Panc1 (cell line): ENCODE measurements at regions of chr10 and their contacts with region 1.

Region 1: GRCh38 chr10:22988581-22989360 is 60.9 kb downstream of the ARMC3 start:
- DNase-seq: peak; percentile 35
- ATAC-seq: peak; percentile 75; the same call in 1 of the 2 replicates
- H3K4me3 ChIP-seq: no peak overlapping the region
- H3K27ac ChIP-seq: no peak overlapping the region
- H3K4me1 ChIP-seq: no peaks in the 10 kb centered on the region; the same call in 1 of the 2 replicates
- H3K27me3 ChIP-seq: no peaks in the 10 kb centered on the region; the same call in 1 of the 2 replicates
- CTCF ChIP-seq: peak; percentile 69; the same call in 1 of the 2 replicates

Region 2: GRCh38 chr10:22573820-22574569 is 414.8 kb before region 1 on chr10:
- CTCF ChIA-PET with region 1: no interaction called
- POLR2A ChIA-PET with region 1: no interaction called
- in situ Hi-C with region 1: no loop called
- intact Hi-C with region 1: loop called (anchors 10 kb)
- DNase-seq: no peak
- ATAC-seq: no peak
- H3K4me3 ChIP-seq: no peak overlapping the region
- H3K27ac ChIP-seq: no peak overlapping the region
- H3K4me1 ChIP-seq: no peaks in the 10 kb centered on the region
- H3K27me3 ChIP-seq: no peaks in the 10 kb centered on the region
- CTCF ChIP-seq: peak; percentile 66

Region 3: DNA sequence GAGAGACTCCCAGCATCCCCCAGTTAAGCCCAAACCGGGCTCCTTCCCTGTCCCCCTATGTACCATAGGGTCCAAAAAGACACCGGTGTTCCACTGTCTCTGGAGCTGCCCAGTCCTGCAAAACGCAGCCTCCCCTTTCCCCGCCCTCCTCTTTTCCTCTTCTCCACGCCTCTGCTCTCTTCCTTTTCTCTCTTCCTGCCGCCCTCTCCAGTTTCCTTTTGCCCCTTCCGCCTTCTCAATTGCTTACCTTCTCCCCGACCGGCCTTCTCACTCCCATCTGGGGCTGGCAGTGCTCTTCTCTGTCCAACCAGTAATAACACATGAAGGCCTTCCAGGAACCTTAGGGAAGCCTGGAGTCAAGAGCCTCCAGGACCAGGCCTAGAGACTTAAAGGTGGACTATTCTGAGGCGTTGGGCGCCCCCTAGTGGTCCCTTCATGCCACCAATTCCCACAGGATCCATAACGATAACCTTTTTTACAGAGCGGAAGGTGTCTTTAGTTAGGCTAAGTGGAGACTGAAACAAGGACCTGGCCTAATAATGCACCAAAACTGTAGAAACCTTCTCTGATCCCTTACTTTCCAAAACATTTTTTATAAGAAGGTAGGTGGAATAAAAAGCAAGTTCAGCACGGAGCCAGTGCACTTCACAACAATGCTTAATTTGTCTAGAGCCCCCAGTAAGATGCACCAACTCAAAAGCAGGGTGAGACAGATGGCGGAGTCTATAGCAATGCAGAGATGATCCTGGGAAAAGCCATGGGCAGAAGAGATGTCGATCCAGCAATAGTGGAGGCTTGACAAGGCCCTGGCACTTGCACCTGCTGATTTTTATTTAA is 79.4 kb after region 1 on chr10:
- CTCF ChIA-PET with region 1: no interaction called
- POLR2A ChIA-PET with region 1: no interaction called
- in situ Hi-C with region 1: no loop called
- intact Hi-C with region 1: loop called (anchors 5 kb)
- DNase-seq: peak; percentile 46
- ATAC-seq: peak; percentile 98
- H3K4me3 ChIP-seq: no peak overlapping the region
- H3K27ac ChIP-seq: no peak overlapping the region
- H3K4me1 ChIP-seq: 0 out of 2 replicates have a peak, but pooled peaks cover 4% of the 10 kb centered on the region
- H3K27me3 ChIP-seq: no peaks in the 10 kb centered on the region
- CTCF ChIP-seq: peak; percentile 87